Heart right ventricle (tissue), 16 donors: ENCODE measurements at regions of chr4 and their contacts with region 1.

Region 1: GRCh38 chr4:65498606-65499005 is 171.7 kb downstream of the EPHA5 start:
- DNase-seq: no peak
- ATAC-seq: no peak
- H3K4me3 ChIP-seq: no peak overlapping the region
- H3K27ac ChIP-seq: no peak overlapping the region
- H3K4me1 ChIP-seq: no peaks in the 10 kb centered on the region
- H3K27me3 ChIP-seq: no peaks in the 10 kb centered on the region
- CTCF ChIP-seq: no peak

Region 2: DNA sequence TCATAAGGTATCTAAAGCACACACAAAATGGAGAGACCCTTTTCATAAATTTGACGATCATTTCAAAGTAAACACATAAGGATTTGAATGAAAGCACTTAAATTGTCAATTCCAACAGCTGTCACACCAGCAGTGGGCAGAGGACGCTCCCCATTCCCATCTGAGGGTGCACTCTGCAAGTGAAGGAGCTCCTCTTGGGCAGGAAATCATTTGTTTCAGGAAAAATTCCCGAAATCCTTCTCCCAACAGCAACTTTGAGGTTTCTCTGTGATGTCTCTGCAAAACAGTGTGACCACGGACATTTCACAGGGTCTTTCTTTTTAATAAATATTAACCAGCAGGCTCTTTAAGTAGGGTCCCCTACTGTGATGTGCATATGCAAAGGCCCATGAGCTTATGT is 60.7 kb after region 1 on chr4:
- intact Hi-C with region 1: loop called in 1 of 10 experiments (anchors 2 kb)
- DNase-seq: no peak
- ATAC-seq: no peak
- H3K4me3 ChIP-seq: no peak overlapping the region
- H3K27ac ChIP-seq: no peak overlapping the region
- H3K4me1 ChIP-seq: no peaks in the 10 kb centered on the region
- H3K27me3 ChIP-seq: no peaks in the 10 kb centered on the region
- CTCF ChIP-seq: no peak